ENCODE measurements at regions of chr3 and their contacts with region 1.

Region 1: GRCh38 chr3:64224826-64225610 is at the start of gene PRICKLE2:
- DNase-seq: peak; percentile 89 to 94
- H3K4me3 ChIP-seq: peak within 1 kb of the TSS in 1 of 3 donors; percentile 16
- H3K27ac ChIP-seq: peak within 1 kb of the TSS; percentile 55 to 71 (median 64)
- H3K4me1 ChIP-seq: peaks cover 29 to 66% of the 10 kb centered on the region in 2 donors
- H3K27me3 ChIP-seq: no peaks in the 10 kb centered on the region
- CTCF ChIP-seq: peak in 4 of 6 experiments; percentile 17 to 52 (median 36)
- POLR2A ChIP-seq: peak in 1 of 2 donors; percentile 54
- total RNA-seq, gene PRICKLE2: 28.8 to 48.1 (median 38.5) TPM

Region 2: GRCh38 chr3:64392001-64392400 is 167.0 kb after region 1 on chr3:
- intact Hi-C with region 1: no loop called
- DNase-seq: no peak
- H3K4me3 ChIP-seq: no peak overlapping the region
- H3K27ac ChIP-seq: no peak overlapping the region
- H3K4me1 ChIP-seq: no peaks in the 10 kb centered on the region
- H3K27me3 ChIP-seq: no peaks in the 10 kb centered on the region
- CTCF ChIP-seq: no peak
- POLR2A ChIP-seq: no peak

Region 3: DNA sequence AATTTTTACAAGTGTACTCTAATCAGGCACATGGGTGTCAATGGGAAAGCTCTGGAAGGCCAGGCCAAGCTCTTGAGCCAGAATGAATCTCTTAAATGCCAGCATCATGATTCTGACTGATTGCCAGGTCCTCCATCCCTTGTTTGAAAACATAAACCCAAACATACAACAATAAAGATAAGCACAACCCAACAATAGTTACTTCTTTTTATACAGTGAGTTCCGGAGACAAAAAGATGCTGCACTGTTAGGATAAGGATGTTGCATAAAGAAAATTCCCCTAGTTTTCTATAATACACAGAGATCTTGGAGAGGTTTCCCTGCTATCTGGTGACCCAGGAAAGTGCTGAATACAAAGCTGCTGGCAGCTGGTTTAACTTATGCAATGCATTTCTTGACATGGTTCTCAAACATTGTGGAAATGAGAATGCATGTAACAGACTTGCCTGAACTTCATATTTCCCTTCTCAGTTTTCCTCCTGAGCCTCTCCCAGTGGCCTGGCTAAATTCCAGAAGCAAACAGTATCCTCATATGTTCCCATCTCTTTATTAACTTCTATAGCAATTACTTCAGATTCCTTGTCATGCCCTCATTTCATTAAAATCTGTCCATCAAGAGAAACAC is 180.3 kb after region 1 on chr3:
- intact Hi-C with region 1: loop called (anchors 10 kb)
- DNase-seq: no peak
- H3K4me3 ChIP-seq: no peak overlapping the region
- H3K27ac ChIP-seq: no peak overlapping the region
- H3K4me1 ChIP-seq: no peaks in the 10 kb centered on the region
- H3K27me3 ChIP-seq: no peaks in the 10 kb centered on the region
- CTCF ChIP-seq: no peak
- POLR2A ChIP-seq: no peak